ENCODE measurements at regions of chr13 and their contacts with region 1.

Region 1: GRCh38 chr13:36858290-36858689 is 39.3 kb downstream of the RFXAP start:
- DNase-seq: no peak

Region 2: DNA sequence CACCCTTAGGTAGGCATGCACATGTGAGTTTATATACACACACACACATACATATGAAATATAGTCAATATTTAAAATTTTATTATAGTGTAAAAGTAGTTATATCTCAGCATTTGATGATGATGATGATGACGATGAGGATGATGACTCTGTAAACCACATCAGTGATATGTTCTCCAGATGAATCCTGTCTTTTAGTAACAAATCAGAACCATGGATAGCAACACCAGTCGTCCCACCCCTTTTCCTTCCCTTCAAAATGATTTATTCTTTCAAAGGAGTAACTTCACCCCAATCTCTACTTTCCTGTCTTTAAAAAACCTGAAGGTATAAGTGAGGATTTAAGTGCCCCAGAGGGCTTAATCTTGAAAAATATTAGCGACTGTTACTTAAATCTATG is 801.3 kb before region 1 on chr13:
- intact Hi-C with region 1: no loop called
- DNase-seq: no peak

Region 3: DNA sequence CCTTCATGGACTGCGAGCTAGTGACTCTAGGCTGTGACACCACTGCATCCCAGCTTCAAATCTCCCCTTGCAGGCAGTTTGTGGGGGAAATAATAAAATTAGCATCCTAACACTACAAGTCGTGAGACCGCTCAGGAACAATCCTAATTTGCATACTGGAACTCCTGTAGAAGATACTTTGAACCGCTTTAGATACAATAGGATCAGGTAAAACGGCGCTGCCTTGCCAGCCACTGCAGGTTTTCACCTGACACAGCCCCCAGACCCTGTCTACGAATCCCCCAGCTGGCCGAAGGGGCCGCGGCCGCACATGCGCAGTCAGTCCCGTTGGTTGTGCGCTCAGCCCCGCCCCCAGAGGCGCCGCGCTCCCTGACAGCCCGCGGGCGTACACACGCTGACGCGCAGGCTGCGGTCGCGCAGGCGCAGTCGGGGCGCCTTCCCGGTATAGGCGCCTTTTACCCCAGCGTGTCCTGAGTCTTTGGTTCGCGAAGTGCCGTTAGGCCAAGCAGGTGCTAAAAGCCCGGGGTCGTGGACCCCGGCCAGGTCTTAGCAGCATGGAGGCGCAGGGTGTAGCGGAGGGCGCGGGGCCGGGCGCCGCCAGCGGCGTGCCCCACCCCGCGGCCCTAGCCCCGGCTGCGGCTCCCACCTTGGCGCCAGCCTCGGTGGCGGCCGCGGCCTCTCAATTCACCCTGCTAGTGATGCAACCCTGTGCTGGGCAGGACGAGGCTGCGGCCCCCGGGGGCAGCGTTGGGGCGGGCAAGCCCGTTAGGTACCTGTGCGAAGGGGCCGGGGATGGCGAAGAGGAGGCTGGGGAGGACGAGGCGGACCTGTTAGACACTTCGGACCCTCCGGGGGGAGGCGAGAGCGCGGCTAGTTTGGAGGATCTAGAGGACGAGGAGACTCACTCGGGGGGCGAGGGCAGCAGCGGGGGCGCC is 39.2 kb before region 1 on chr13 and contains the start of gene RFXAP:
- intact Hi-C with region 1: no loop called
- DNase-seq: peak; percentile 95
- total RNA-seq, gene RFXAP: 5.0 TPM

Region 4: GRCh38 chr13:36919833-36920615 is 61.7 kb after region 1 on chr13 and contains the start of gene SMAD9:
- intact Hi-C with region 1: loop called (anchors 5 kb)
- DNase-seq: peak; percentile 88
- total RNA-seq, gene SMAD9: 11.5 TPM

Region 5: DNA sequence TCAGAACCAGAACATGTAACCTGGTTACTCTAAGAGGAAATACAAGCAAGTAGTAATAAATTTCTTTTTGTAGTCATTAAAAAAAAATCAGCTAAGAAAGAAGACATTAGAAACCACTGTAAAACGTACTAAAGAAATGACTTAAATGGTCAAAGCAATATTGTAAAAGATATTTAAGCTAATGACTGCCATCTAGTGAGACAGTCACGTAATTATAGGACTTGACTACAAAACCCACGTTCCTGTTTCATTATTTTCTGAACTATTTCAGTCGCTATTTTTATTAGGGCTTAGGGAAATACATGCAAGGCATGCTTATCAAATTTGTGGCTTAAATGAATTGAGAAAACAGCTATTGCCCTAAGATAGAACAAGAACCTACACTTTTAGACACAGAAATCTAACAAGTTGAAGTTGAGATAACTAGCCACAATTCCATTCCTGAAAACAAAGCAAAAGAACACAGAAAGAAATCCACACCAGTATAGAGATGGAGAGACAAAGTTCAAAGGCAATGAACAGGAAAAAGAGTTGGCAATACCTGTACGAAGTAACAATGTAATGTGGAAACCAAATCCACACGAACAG is 123.0 kb after region 1 on chr13:
- intact Hi-C with region 1: loop called (anchors 5 kb)
- DNase-seq: no peak

Region 6: DNA sequence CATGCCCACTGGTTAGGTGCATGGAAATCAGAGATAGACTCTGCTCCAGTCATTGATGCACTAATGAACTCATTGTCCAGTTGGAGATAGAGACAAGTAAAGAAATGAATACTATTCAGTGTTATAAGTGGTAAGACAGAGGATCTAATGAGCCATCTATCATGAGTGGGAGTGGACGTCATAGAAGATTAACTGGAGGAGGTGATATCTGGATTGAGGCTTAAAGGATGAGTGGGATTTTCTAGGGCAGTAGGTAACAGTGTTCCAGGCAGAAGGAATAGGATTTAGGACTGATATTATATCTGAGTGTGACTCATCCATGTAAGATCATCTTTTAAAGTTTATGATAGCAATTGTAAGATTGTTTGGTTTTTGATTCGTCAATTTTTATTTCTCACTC is 399.4 kb after region 1 on chr13:
- intact Hi-C with region 1: no loop called
- DNase-seq: no peak

Measured in cardiac septum (tissue), 1 donor.